ENCODE measurements at regions of chrX and their contacts with region 1.

Region 1: GRCh38 chrX:136055651-136056221 is 70.5 kb downstream of the SLC9A6 start:
- DNase-seq: peak; percentile 82
- ATAC-seq: peak; percentile 93
- H3K4me3 ChIP-seq: no peak overlapping the region
- H3K27ac ChIP-seq: peak overlapping the region; percentile 38; the same call in 1 of the 2 replicates
- H3K4me1 ChIP-seq: peaks cover 6% of the 10 kb centered on the region
- H3K27me3 ChIP-seq: no peaks in the 10 kb centered on the region
- CTCF ChIP-seq: no peak
- POLR2A ChIP-seq: no peak
- RAD21 ChIP-seq: no peak

Region 2: GRCh38 chrX:134718105-134718965 is 1337.4 kb before region 1 on chrX:
- CTCF ChIA-PET with region 1: no interaction called
- POLR2A ChIA-PET with region 1: no interaction called
- dilution Hi-C with region 1: no loop called
- in situ Hi-C with region 1: no loop called
- intact Hi-C with region 1: no loop called
- DNase-seq: peak; percentile 95
- ATAC-seq: peak; percentile 92
- H3K4me3 ChIP-seq: no peak overlapping the region
- H3K27ac ChIP-seq: peak overlapping the region; percentile 48; the same call in 1 of the 2 replicates
- H3K4me1 ChIP-seq: peaks cover 6% of the 10 kb centered on the region; the same call in 1 of the 2 replicates
- H3K27me3 ChIP-seq: peaks cover 2% of the 10 kb centered on the region; the same call in 1 of the 2 replicates
- CTCF ChIP-seq: no peak
- POLR2A ChIP-seq: no peak
- RAD21 ChIP-seq: peak; percentile 18; the same call in 1 of the 2 replicates

Region 3: DNA sequence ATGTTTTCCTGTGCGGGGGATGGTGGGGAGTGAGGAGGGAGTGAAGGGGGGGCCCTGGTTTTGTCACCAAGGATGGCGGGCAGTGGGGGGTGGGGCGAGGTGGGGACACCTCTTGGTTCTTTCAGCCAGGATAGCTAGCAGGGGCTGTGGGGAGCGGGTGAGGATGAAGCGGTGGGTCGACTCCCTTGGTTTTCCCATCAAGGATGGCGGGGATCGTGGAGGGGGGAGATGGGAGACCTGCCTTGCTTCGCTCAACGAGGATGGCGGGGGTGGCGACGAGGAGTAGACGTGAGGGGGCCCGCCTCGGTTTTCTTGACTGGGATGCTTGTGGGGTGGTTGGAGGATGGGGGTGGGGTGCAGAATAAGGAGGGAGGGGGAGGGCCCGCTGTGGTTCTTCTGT is 92.2 kb after region 1 on chrX:
- CTCF ChIA-PET with region 1: no interaction called
- POLR2A ChIA-PET with region 1: no interaction called
- dilution Hi-C with region 1: no loop called
- in situ Hi-C with region 1: no loop called
- intact Hi-C with region 1: loop called (anchors 2 kb)
- DNase-seq: no peak
- ATAC-seq: no peak; the same call in 1 of the 2 replicates
- H3K4me3 ChIP-seq: peak overlapping the region; percentile 93
- H3K27ac ChIP-seq: peak overlapping the region; percentile 73
- H3K4me1 ChIP-seq: no peaks in the 10 kb centered on the region; the same call in 1 of the 2 replicates
- H3K27me3 ChIP-seq: peaks cover 7% of the 10 kb centered on the region
- CTCF ChIP-seq: no peak
- POLR2A ChIP-seq: no peak
- RAD21 ChIP-seq: no peak

Measured in IMR-90 (cell line).